MCF 10A (cell line): ENCODE measurements at regions of chr16 and their contacts with region 1.

Region 1: GRCh38 chr16:52912565-52913173 is 140.0 kb downstream of the CHD9NB start:
- DNase-seq: peak; percentile 78
- H3K4me3 Mint-ChIP-seq: no peak overlapping the region
- H3K27ac Mint-ChIP-seq: no peak overlapping the region
- H3K4me1 Mint-ChIP-seq: no peaks in the 10 kb centered on the region
- H3K27me3 Mint-ChIP-seq: peaks cover 30% of the 10 kb centered on the region
- CTCF ChIP-seq: peak; percentile 82

Region 2: DNA sequence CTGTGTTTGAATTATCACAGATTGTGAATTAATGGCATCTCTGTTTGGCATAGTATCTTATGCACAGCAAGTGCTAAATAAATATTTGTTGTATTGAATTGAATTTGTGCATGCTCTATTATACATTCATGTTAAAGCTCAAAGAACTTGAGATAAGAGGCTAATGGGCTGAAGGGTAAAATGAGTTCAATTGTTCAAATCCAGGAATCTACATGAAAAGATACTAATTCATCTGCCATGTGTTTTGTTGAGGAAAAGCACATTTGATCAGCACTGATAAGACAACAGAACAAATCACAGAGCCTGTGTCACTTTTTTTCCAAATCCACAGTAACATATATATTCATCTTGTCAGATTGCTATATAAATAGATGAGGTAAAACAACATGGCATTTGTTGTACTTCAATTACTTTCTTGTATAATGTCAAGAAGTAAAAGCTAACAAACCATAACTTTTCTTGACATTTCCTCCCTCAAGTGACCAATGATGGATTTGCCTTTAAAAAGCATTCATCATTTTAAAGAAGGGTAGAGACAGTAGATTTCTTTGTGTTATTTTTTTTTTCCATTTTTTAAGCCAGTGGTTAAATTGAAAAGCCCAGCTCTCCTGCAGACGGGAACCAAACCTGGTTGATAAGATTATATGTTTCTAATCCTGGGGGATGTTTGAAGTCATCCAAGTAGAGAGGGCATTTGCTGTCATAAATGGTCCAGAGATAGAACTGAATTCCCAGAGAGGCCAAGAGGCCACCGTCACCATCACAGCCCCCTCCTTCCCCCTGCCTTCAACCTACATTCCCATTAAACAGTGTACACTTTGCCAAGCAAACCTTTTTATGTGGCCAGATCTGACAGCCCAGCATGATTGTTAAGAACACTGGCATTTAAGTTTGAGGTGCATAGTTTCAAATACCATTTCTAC is 17.1 kb after region 1 on chr16:
- CTCF ChIA-PET with region 1: interaction called, 56 read pairs
- POLR2A ChIA-PET with region 1: no interaction called
- intact Hi-C with region 1: no loop called
- DNase-seq: no peak
- H3K4me3 Mint-ChIP-seq: no peak overlapping the region
- H3K27ac Mint-ChIP-seq: no peak overlapping the region
- H3K4me1 Mint-ChIP-seq: no peaks in the 10 kb centered on the region
- H3K27me3 Mint-ChIP-seq: no peaks in the 10 kb centered on the region
- CTCF ChIP-seq: no peak

Region 3: DNA sequence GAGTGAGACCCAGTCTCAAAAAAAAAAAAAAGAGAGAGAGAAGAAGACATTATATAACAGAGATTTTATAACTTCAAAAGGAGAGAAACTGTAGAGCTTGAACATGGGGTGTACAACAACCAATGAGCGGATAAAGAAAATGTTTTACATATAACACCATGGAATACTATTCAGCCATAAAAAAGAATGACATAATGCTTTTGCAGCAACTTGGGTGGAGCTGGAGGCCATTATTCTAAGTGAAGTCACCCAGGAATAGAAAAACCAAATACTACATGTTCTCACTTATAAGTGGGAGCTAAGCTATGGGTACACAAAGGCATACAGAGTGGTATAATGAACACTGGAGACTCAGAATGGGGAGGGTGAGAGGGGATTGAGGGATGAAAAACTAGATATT is 78.9 kb after region 1 on chr16:
- CTCF ChIA-PET with region 1: interaction called, 12 read pairs
- POLR2A ChIA-PET with region 1: no interaction called
- intact Hi-C with region 1: no loop called
- DNase-seq: no peak
- H3K4me3 Mint-ChIP-seq: no peak overlapping the region
- H3K27ac Mint-ChIP-seq: no peak overlapping the region
- H3K4me1 Mint-ChIP-seq: no peaks in the 10 kb centered on the region
- H3K27me3 Mint-ChIP-seq: no peaks in the 10 kb centered on the region
- CTCF ChIP-seq: no peak